CD8-positive, alpha-beta memory T cell (primary cell): ENCODE measurements at regions of chr17 and their contacts with region 1.

Region 1: DNA sequence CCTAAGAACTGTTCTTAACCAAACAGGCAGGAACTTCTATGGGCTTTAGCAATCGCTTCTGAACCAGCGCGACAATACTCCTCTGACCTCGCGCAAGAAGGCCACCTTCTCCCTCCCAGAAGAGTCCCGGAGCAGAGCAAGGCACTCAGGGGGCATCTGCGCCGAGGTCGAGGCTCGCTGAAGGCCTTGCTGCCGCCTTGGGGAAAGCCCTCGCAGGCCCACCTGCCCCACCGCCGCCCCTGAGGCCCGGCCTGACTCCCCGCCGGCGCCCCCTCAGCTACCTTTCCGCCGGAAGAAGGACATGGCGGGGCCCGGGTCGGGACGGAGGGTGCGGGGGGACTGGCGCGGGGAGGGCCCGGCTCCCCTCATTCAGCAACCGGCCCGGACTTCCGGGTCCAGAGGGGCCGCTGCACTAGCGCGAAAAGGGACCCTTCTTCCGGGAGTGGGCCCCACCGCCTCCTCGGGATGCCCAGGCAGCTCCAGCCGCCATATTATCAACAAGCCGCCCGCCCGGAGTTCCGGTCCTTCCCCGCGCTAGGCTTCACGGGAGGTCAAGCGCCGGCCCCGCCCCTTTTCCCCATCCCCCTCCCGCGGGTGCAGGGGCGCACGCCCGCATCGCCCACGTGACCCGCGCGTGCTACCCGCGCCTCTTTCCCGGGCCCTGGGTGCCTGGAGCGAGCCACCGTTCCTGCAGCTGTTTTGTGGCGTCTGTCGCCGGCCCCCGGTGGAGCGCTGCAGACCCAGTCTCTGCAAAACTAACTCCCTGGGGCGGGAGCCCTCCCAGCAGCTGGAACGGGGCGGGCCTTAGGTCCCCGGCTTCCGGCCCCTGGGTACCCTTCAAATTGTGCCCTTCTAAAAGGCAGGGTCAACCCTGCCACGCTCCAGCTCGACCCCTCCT is at the start of gene AKAP10:
- DNase-seq: peak; percentile 86 to 93 (median 91)
- H3K4me3 ChIP-seq: peak within 1 kb of the TSS; percentile 89
- H3K4me3 Mint-ChIP-seq: peak within 1 kb of the TSS; percentile 90 to 99 (median 97)
- H3K27ac ChIP-seq: peak within 1 kb of the TSS; percentile 93
- H3K27ac Mint-ChIP-seq: peak within 1 kb of the TSS; percentile 92 to 99 (median 97)
- H3K4me1 ChIP-seq: peaks cover 32% of the 10 kb centered on the region
- H3K4me1 Mint-ChIP-seq: peaks cover 45 to 56% (median 55%) of the 10 kb centered on the region in 3 donors
- H3K27me3 ChIP-seq: no peaks in the 10 kb centered on the region
- H3K27me3 Mint-ChIP-seq: no peaks in the 10 kb centered on the region
- total RNA-seq, gene AKAP10: 31.7 to 32.6 TPM

Region 2: GRCh38 chr17:20009302-20010098 is 31.9 kb after region 1 on chr17 and contains the start of gene SPECC1:
- CTCF ChIA-PET with region 1: interaction called, 8 read pairs
- POLR2A ChIA-PET with region 1: interaction called, 16 read pairs
- DNase-seq: peak; percentile 77 to 88 (median 83)
- H3K4me3 ChIP-seq: peak within 1 kb of the TSS; percentile 82
- H3K4me3 Mint-ChIP-seq: peak within 1 kb of the TSS; percentile 87 to 97 (median 94)
- H3K27ac ChIP-seq: no peak within 1 kb of the TSS
- H3K27ac Mint-ChIP-seq: peak within 1 kb of the TSS in 7 of 8 donors; percentile 48 to 91 (median 88)
- H3K4me1 ChIP-seq: peaks cover 12% of the 10 kb centered on the region
- H3K4me1 Mint-ChIP-seq: peaks cover 11 to 15% (median 14%) of the 10 kb centered on the region in 3 donors
- H3K27me3 ChIP-seq: peaks cover 4% of the 10 kb centered on the region
- H3K27me3 Mint-ChIP-seq: peaks cover 26 to 48% of the 10 kb centered on the region in 2 donors
- total RNA-seq, gene SPECC1: 12.5 to 13.4 TPM